ENCODE measurements at regions of chrX and their contacts with region 1.

Region 1: DNA sequence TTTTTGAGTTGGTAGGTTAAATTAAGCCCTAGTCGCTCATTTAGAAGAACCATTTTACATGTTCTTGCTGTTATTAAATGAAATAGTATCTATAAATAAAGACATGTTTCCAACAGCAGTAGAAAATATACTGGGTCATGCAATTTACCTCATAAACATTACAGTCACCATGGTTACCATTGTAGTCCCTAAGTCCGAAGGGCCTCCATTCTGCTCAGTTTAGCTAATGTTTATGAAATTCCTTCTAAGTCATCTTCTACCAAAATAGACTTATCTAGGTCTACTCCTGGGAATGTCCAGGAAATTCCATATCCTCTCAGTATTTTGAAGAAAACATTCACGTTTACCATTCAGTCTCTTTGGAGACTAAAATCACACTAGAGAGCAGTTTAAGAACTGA is 292.5 kb upstream of the DCAF8L1 start:
- DNase-seq: peak; percentile 77
- H3K4me3 ChIP-seq: no peak overlapping the region
- H3K27ac ChIP-seq: no peak overlapping the region
- H3K4me1 ChIP-seq: no peaks in the 10 kb centered on the region
- H3K27me3 ChIP-seq: no peaks in the 10 kb centered on the region
- CTCF ChIP-seq: no peak
- POLR2A ChIP-seq: no peak

Region 2: DNA sequence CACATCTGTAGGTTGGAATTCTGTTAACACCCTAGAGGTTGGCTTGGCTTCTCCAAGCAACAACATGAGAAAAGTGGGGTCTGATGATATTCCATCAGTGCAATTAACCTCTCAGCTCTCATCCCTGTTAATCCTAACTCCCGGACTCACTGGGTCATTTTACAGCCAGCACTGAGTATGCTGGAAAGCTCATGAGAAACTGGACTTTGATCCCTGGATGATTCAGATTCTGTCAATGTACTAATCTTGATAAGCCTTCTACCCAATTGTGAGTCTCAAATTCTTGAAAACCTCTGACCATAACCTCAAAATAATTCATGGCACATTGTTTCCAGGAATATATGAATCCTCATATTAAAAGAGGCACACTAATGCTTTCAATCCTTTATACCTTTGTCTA is 48.2 kb before region 1 on chrX:
- CTCF ChIA-PET with region 1: no interaction called
- POLR2A ChIA-PET with region 1: no interaction called
- dilution Hi-C with region 1: no loop called
- intact Hi-C with region 1: no loop called
- DNase-seq: no peak
- H3K4me3 ChIP-seq: no peak overlapping the region
- H3K27ac ChIP-seq: no peak overlapping the region
- H3K4me1 ChIP-seq: no peaks in the 10 kb centered on the region
- H3K27me3 ChIP-seq: no peaks in the 10 kb centered on the region
- CTCF ChIP-seq: no peak
- POLR2A ChIP-seq: no peak

Region 3: DNA sequence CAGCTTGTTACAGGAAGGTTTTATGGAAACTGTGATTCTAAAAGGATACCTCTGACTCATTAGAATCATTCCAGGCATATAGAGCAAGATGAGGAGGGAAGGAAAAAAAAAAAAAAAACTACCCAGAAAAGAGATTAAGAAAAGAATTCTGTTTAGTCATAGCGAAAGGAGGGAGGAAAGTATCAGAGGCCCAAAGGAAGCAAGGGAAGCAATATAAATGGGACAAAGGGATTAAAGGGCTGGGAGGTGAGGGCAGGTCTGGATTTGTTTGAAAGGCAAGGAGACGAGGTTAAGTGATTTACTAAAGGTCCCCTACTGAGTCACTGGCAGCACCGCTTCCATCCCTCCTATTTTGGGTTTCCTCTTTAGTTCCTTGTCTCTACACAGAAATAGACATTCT is 224.9 kb after region 1 on chrX:
- CTCF ChIA-PET with region 1: no interaction called
- POLR2A ChIA-PET with region 1: no interaction called
- dilution Hi-C with region 1: no loop called
- intact Hi-C with region 1: loop called (anchors 10 kb)
- DNase-seq: peak; percentile 76
- H3K4me3 ChIP-seq: peak overlapping the region in 1 of 3 experiments; percentile 45
- H3K27ac ChIP-seq: peak overlapping the region; percentile 79
- H3K4me1 ChIP-seq: peaks cover 21% of the 10 kb centered on the region
- H3K27me3 ChIP-seq: no peaks in the 10 kb centered on the region
- CTCF ChIP-seq: no peak
- POLR2A ChIP-seq: no peak

Measured in endothelial cell of umbilical vein (primary cell).